ENCODE measurements at regions of chr4 and their contacts with region 1.

Region 1: GRCh38 chr4:128204901-128205300 is 82.7 kb downstream of the PGRMC2 start:
- DNase-seq: no peak
- H3K4me3 Mint-ChIP-seq: no peak overlapping the region
- H3K27ac Mint-ChIP-seq: no peak overlapping the region
- H3K4me1 Mint-ChIP-seq: no peaks in the 10 kb centered on the region
- H3K27me3 Mint-ChIP-seq: no peaks in the 10 kb centered on the region

Region 2: DNA sequence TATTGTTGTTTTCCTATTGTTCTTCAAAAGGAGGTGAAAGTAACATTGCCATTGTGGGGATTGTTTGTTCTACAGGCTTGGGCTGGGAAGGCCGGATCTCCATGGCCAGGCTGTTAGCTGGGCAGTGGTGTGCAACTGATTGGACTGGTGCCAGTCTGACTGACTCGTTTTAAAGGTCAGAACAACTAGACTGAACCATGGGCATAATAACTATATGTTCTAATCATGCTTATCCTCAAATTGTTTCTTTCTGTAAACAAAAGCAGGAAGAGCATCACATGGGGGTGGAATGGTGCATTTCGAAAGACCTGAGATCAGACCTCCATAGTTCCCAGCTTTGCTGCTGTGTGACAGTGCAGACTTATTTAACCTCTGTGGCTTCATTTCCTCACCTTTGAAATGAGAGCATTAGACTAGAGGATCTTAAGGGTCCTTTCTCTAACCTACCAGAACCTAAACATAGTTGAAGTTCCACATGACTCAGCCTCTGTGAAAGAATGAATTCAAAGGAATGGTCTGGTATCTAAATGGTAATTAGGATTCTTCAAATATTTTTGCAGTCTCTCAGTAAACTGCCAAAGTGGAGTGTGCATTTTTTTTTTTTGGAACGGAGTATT is 149.4 kb after region 1 on chr4:
- intact Hi-C with region 1: loop called (anchors 10 kb)
- DNase-seq: no peak
- H3K4me3 Mint-ChIP-seq: no peak overlapping the region
- H3K27ac Mint-ChIP-seq: no peak overlapping the region
- H3K4me1 Mint-ChIP-seq: no peaks in the 10 kb centered on the region
- H3K27me3 Mint-ChIP-seq: no peaks in the 10 kb centered on the region

Measured in activated T-helper 1 cell treated with anti-CD3 and anti-CD28 coated beads, Interleukin-12 subunit alpha, Interleukin-12 subunit beta, Interleukin-2, Interleukin-4 antibody, amounts not matched to agents 30 ng/mL and 10 ng/mL and 1 ng/mL, durations not matched to agents 14 hours and 24 hours and 36 hours (primary cell).